ENCODE measurements at regions of chr9 and their contacts with region 1.

Region 1: GRCh38 chr9:104863180-104863883 is 64.6 kb downstream of the ABCA1 start:
- DNase-seq: peak; percentile 87
- CTCF ChIP-seq: peak; percentile 85

Region 2: GRCh38 chr9:105141146-105141975 is 278.0 kb after region 1 on chr9:
- in situ Hi-C with region 1: no loop called
- DNase-seq: peak; percentile 38
- CTCF ChIP-seq: no peak

Region 3: GRCh38 chr9:105157130-105157583 is 293.8 kb after region 1 on chr9:
- in situ Hi-C with region 1: loop called (anchors 10 kb)
- DNase-seq: peak; percentile 61
- CTCF ChIP-seq: peak; percentile 45

Region 4: GRCh38 chr9:105405514-105406131 is 542.3 kb after region 1 on chr9:
- in situ Hi-C with region 1: loop called (anchors 5 kb)
- DNase-seq: peak; percentile 45
- CTCF ChIP-seq: no peak

Measured in GM13977 (cell line).